ENCODE measurements at regions of chr6 and their contacts with region 1.

Region 1: GRCh38 chr6:111087106-111087835 is at the start of gene SLC16A10:
- DNase-seq: peak; percentile 75 to 82 (median 79)
- H3K4me3 ChIP-seq: peak within 1 kb of the TSS; percentile 62 to 74
- H3K4me3 Mint-ChIP-seq: peak within 1 kb of the TSS; percentile 88 to 99 (median 93)
- H3K27ac ChIP-seq: peak within 1 kb of the TSS; percentile 47
- H3K27ac Mint-ChIP-seq: peak within 1 kb of the TSS; percentile 77 to 92 (median 90)
- H3K4me1 ChIP-seq: peaks cover 22% of the 10 kb centered on the region
- H3K4me1 Mint-ChIP-seq: peaks cover 21 to 37% (median 26%) of the 10 kb centered on the region in 4 donors
- H3K27me3 ChIP-seq: no peaks in the 10 kb centered on the region
- H3K27me3 Mint-ChIP-seq: peaks cover 7 to 15% of the 10 kb centered on the region in 2 donors
- total RNA-seq, gene SLC16A10: 9.8 to 11.2 TPM

Region 2: GRCh38 chr6:111105578-111105977 is 18.3 kb after region 1 on chr6:
- CTCF ChIA-PET with region 1: no interaction called
- POLR2A ChIA-PET with region 1: no interaction called
- intact Hi-C with region 1: no loop called
- DNase-seq: no peak
- H3K4me3 ChIP-seq: no peak overlapping the region
- H3K4me3 Mint-ChIP-seq: no peak overlapping the region
- H3K27ac ChIP-seq: no peak overlapping the region
- H3K27ac Mint-ChIP-seq: peak overlapping the region in 1 of 7 donors; percentile 43
- H3K4me1 ChIP-seq: no peaks in the 10 kb centered on the region
- H3K4me1 Mint-ChIP-seq: peaks cover 2 to 11% (median 8%) of the 10 kb centered on the region in 4 donors
- H3K27me3 ChIP-seq: no peaks in the 10 kb centered on the region
- H3K27me3 Mint-ChIP-seq: peaks cover 0 to 1% of the 10 kb centered on the region in 2 donors

Region 3: DNA sequence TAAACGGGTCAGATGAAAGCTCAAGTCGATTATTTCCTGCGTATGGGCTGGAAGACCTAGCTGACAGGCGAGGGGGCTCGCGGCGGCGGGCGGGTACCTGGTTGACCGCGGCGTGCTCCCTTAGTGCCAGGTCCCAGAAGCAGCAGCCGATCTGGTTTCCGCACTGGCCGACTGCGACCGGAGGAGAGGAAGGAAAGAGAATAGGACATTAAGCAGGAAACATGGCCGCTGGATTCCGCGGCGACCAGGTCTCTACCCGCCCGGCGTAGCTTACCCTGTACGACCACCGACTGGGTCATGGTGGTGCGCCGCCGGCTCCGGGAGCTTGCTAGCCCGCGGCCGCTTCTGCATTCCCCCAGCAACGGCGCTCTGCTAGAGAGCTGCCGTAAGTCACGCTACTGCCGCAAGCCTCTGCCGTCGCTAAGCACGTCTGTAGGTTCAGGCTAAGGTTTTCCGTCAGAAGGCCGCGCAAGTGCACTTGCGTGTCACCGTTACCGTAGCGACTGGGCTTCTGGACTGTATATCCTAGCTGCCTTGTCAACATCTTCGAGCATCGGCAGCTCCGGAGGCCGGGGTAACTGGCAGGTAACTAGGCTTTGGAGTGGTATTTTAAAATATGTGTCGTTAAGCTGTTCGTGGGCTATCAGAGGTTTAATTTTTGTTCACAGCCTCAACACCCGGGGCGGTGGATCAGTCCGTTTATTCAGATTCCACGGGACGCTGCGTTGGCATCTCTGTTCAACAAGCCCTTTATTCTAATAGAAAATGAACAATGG is 1000.1 kb after region 1 on chr6 and contains the starts of genes FAM229B and TUBE1:
- CTCF ChIA-PET with region 1: no interaction called
- POLR2A ChIA-PET with region 1: no interaction called
- intact Hi-C with region 1: loop called (anchors 5 kb)
- DNase-seq: peak; percentile 89 to 97 (median 93)
- H3K4me3 ChIP-seq: peak within 1 kb of the TSS; percentile 31 to 80
- H3K4me3 Mint-ChIP-seq: no peak within 1 kb of the TSS
- H3K27ac ChIP-seq: peak within 1 kb of the TSS; percentile 78
- H3K27ac Mint-ChIP-seq: peak within 1 kb of the TSS in 1 of 7 donors; percentile 59
- H3K4me1 ChIP-seq: peaks cover 15% of the 10 kb centered on the region
- H3K4me1 Mint-ChIP-seq: peaks cover 6 to 15% (median 8%) of the 10 kb centered on the region in 4 donors
- H3K27me3 ChIP-seq: peaks cover 15% of the 10 kb centered on the region
- H3K27me3 Mint-ChIP-seq: peaks cover 13 to 17% of the 10 kb centered on the region in 2 donors
- total RNA-seq, gene FAM229B: 1.7 to 1.9 TPM
- total RNA-seq, gene TUBE1: 40.6 to 45.2 TPM

Measured in CD4-positive, alpha-beta memory T cell (primary cell).